T-cell (primary cell): ENCODE measurements at regions of chr10 and their contacts with region 1.

Region 1: DNA sequence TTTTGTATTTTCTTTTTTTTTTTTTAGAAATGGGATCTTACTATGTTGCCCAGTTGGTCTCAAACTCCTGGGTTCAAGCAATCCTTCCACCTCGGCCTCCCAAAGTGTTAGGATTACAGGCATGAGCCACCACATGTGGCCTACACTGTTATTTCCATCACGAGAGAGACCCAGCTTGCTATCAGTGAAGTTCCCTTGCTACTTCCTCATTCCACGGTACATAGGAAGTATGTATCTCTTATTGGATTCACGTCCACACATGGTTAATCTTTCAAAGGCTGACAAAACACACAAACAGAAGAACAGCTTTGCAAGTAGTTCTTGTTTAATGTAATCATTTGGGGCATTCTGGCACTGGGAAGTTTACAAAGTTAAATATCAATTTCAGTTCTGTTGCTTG is 50.9 kb downstream of the DCLRE1A start:
- DNase-seq: no peak
- ATAC-seq: no peak
- H3K4me3 ChIP-seq: no peak overlapping the region
- H3K4me3 Mint-ChIP-seq: no peak overlapping the region
- H3K27ac ChIP-seq: no peak overlapping the region
- H3K27ac Mint-ChIP-seq: no peak overlapping the region
- H3K4me1 ChIP-seq: no peaks in the 10 kb centered on the region
- H3K4me1 Mint-ChIP-seq: peaks cover 0 to 3% (median 2%) of the 10 kb centered on the region in 3 donors
- H3K27me3 ChIP-seq: no peaks in the 10 kb centered on the region
- H3K27me3 Mint-ChIP-seq: peaks cover 0 to 18% of the 10 kb centered on the region in 2 donors

Region 2: GRCh38 chr10:113843972-113844485 is 41.0 kb after region 1 on chr10:
- CTCF ChIA-PET with region 1: interaction called in 1 of 2 experiments, 12 read pairs
- POLR2A ChIA-PET with region 1: no interaction called
- DNase-seq: no peak
- ATAC-seq: no peak
- H3K4me3 ChIP-seq: no peak overlapping the region
- H3K4me3 Mint-ChIP-seq: no peak overlapping the region
- H3K27ac ChIP-seq: no peak overlapping the region
- H3K27ac Mint-ChIP-seq: no peak overlapping the region
- H3K4me1 ChIP-seq: no peaks in the 10 kb centered on the region
- H3K4me1 Mint-ChIP-seq: peaks cover under 1 to 8% (median 7%) of the 10 kb centered on the region in 3 donors
- H3K27me3 ChIP-seq: no peaks in the 10 kb centered on the region
- H3K27me3 Mint-ChIP-seq: no peaks in the 10 kb centered on the region

Region 3: GRCh38 chr10:114103284-114103683 is 300.3 kb after region 1 on chr10:
- CTCF ChIA-PET with region 1: interaction called, 9 to 15 read pairs
- POLR2A ChIA-PET with region 1: no interaction called
- DNase-seq: peak in 1 of 35 experiments; percentile 59
- ATAC-seq: peak in 2 of 4 experiments; percentile 39 to 62
- H3K4me3 ChIP-seq: no peak overlapping the region
- H3K4me3 Mint-ChIP-seq: peak overlapping the region in 1 of 3 donors; percentile 33
- H3K27ac ChIP-seq: no peak overlapping the region
- H3K27ac Mint-ChIP-seq: no peak overlapping the region
- H3K4me1 ChIP-seq: peaks cover 15 to 33% of the 10 kb centered on the region in 2 experiments
- H3K4me1 Mint-ChIP-seq: peaks cover 27 to 33% (median 31%) of the 10 kb centered on the region in 3 donors
- H3K27me3 ChIP-seq: peaks cover 2 to 24% of the 10 kb centered on the region in 2 experiments
- H3K27me3 Mint-ChIP-seq: peaks cover 24 to 36% of the 10 kb centered on the region in 2 donors